ENCODE measurements at regions of chr9 and their contacts with region 1.

Region 1: GRCh38 chr9:136700959-136701667 is 11.3 kb upstream of the DIPK1B start:
- DNase-seq: no peak
- H3K4me3 ChIP-seq: peak overlapping the region in 1 of 4 donors; percentile 35
- H3K27ac ChIP-seq: no peak overlapping the region
- H3K4me1 ChIP-seq: peaks cover 0 to 25% (median 0%) of the 10 kb centered on the region in 3 donors
- H3K27me3 ChIP-seq: peaks cover 0 to 72% (median 6%) of the 10 kb centered on the region in 4 donors
- CTCF ChIP-seq: no peak
- POLR2A ChIP-seq: no peak

Region 2: DNA sequence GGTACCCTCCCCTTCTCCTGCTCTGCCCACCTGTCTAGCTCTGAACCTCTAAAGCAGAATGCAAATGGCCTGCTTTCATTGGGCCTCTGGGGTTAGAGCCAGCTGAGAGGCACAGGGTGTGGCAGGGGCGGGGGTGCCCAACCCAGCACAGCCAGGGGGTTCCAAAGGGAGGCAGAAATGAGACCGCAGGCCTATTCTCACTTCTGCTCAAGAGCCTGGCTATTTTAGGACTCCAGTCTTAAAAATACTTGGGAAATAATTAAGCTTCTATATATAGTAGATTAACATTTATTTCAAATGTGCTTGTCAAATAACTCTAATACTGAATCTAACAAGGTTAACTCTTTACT is 461.2 kb before region 1 on chr9:
- intact Hi-C with region 1: loop called (anchors 10 kb)
- DNase-seq: no peak
- H3K4me3 ChIP-seq: no peak overlapping the region
- H3K27ac ChIP-seq: no peak overlapping the region
- H3K4me1 ChIP-seq: peaks cover 9 to 39% (median 13%) of the 10 kb centered on the region in 3 donors
- H3K27me3 ChIP-seq: no peaks in the 10 kb centered on the region
- CTCF ChIP-seq: no peak
- POLR2A ChIP-seq: no peak

Region 3: GRCh38 chr9:136769710-136770191 is 68.6 kb after region 1 on chr9:
- intact Hi-C with region 1: no loop called
- DNase-seq: no peak
- H3K4me3 ChIP-seq: no peak overlapping the region
- H3K27ac ChIP-seq: no peak overlapping the region
- H3K4me1 ChIP-seq: peaks cover 0 to 4% (median 0%) of the 10 kb centered on the region in 3 donors
- H3K27me3 ChIP-seq: peaks cover 0 to 36% (median 0%) of the 10 kb centered on the region in 4 donors
- CTCF ChIP-seq: peak in 5 of 6 experiments; percentile 15 to 38 (median 18)
- POLR2A ChIP-seq: no peak